H1 (cell line): ENCODE measurements at regions of chr5 and their contacts with region 1.

Region 1: DNA sequence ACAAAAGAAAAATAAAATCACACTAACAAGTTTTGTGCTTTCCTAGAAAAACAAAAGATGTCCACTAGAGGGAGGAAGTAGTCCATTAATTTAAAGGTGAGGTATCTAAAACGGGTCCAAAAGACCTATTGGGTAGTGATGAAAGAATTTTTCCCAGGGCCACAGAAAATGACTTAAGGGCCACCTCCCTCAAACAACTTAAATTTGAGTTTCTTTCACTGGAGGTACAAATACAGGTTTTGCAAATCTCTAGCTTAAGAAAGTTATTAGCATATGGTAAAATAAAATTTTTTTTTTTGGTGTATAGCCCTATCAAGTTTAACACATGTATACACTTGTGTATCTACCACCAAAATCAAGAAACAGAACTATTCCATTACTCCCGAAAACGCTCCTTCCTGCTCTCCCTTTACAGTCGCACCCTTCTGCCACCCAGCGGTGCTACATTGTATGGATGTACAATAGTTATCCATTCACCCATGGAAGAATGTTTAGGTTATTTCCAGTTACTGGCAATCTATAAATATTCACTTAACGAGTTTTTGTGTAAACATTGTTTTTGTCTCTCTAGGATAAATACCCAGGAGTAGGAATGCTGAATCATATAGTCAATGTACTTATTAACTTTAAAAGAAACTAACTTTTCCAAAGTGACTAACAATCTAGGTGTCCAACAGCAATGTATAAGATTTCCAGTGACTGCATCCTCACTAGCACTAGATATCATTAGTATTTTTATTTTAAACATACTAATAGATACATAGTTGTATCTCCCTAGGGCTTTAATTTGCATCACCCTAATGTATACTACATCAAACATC is 21.9 kb downstream of the DEPDC1B start:
- DNase-seq: no peak
- H3K4me3 ChIP-seq: no peak overlapping the region
- H3K27ac ChIP-seq: no peak overlapping the region
- H3K4me1 ChIP-seq: peaks cover 0 to 3% (median 0%) of the 10 kb centered on the region in 4 experiments; a peak in 3 of 7 replicates
- H3K27me3 ChIP-seq: no peaks in the 10 kb centered on the region
- CTCF ChIP-seq: peak in 2 of 3 experiments; percentile 29 to 48; a peak in 2 of 4 replicates
- EP300 ChIP-seq: no peak
- POLR2A ChIP-seq: no peak
- RAD21 ChIP-seq: peak; percentile 65 to 66

Region 2: DNA sequence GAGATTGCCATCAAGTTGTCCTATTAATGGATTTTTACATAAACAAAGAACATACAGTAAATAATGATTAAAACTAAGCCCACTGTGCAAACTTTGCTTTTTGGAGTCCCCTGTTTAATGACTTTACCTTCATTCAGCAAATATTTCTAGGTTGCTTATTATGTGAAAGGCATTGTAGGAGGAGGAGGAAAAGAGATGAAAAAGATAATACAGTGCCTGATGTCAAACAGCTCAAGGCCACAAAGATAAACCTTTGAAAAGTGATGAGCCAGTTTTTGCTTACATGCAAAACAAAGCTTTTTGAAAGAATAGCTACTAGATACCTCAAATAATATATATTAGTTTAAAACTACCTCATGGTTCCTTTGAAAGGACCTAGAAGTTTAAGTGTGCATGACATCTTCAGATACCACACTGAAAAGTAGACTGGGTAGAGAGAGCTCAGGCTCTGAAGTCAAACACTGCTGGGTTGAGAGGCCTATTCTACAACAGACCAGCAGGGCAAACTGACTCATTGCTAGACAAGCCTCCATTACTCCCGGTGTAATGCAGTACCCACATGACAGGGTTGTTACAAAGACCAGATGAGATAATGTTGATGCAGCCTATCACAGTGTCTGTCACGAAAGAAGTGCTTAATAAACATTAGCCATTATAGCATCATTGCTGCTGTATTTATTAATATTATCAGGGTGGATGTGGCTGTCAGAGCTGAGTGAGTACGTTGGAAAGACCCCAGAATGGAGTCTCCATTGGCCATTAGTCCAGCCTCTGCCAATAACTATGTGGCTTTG is 10.1 kb after region 1 on chr5:
- CTCF ChIA-PET with region 1: interaction called, 29 read pairs
- POLR2A ChIA-PET with region 1: interaction called, 6 read pairs
- DNase-seq: no peak
- H3K4me3 ChIP-seq: no peak overlapping the region
- H3K27ac ChIP-seq: no peak overlapping the region
- H3K4me1 ChIP-seq: peaks cover 0 to 2% (median 0%) of the 10 kb centered on the region in 4 experiments; a peak in 1 of 7 replicates
- H3K27me3 ChIP-seq: no peaks in the 10 kb centered on the region
- CTCF ChIP-seq: peak; percentile 1 to 58 (median 43)
- EP300 ChIP-seq: no peak
- POLR2A ChIP-seq: no peak
- RAD21 ChIP-seq: peak; percentile 11 to 42; a peak in 3 of 4 replicates